ENCODE measurements at regions of chr11 and their contacts with region 1.

Region 1: DNA sequence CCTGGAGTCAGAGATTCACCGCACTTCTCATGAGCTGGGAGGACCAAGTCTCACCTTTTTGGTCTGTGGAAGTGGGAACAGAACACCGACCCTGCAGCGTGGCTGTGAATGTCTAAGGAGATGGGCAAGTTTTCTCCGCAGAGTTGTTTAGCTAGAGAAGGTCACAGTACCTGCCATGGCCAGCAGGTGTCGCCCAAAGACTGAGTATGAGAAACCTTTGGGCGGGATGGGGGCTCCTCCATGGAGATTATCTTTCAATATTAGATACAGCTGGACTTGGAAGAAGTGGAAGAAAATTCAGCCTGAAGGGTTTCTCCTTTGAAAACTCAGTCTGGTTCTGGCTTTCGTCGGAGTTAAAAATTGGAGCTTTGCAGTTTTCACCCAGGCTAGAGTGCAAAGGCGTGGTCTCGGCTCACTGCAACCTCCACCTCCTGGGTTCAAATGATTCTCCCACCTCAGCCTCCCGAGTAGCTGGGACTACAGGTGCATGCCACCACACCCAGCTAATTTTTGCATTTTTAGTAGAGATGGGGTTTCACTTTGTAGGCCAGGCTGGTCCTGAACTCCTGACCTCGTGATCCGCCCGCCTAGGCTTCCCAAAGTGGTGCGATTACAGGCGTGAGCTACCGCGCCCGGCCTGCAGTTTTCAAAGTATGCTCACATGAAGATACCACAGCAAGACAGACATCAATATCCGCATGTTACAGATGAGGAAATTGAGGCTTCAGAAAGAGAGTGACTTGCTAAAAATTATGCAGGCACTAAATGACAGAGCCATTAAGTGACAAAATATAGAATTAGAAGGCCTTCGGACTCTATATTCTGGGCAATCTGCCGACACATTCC is 10.7 kb upstream of the DSCAML1 start:
- DNase-seq: peak; percentile 80 to 82
- ATAC-seq: peak in 6 of 8 donors; percentile 38 to 75 (median 53)
- H3K4me3 ChIP-seq: no peak overlapping the region
- H3K27ac ChIP-seq: no peak overlapping the region
- H3K4me1 ChIP-seq: peaks cover 0 to 23% (median 8%) of the 10 kb centered on the region in 9 donors
- H3K27me3 ChIP-seq: peaks cover 0 to 3% (median 0%) of the 10 kb centered on the region in 7 donors
- CTCF ChIP-seq: peak; percentile 72 to 95 (median 92)

Region 2: DNA sequence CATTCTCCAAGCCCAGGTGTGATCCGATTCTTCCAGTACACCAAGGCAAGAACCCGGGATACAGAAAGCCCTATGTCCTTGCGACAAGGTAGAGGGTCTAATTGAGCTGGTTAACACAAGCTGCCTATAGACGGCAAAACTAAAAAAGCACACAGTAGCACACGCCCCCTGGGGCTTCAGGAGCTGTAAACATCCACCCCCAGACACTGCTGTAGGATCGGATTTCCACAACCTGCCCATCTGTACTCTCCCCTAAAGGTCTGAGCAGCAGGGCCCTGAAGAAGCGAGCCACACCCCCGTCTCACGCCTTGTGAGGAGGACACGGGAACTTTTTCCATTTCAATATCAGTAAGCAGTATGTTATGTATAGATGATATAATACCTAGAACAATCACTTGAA is 1659.6 kb before region 1 on chr11:
- intact Hi-C with region 1: no loop called
- DNase-seq: no peak
- ATAC-seq: no peak
- H3K4me3 ChIP-seq: no peak overlapping the region
- H3K27ac ChIP-seq: no peak overlapping the region
- H3K4me1 ChIP-seq: peaks cover 0 to 6% (median 0%) of the 10 kb centered on the region in 9 donors
- H3K27me3 ChIP-seq: peaks cover 0 to 12% (median 8%) of the 10 kb centered on the region in 7 donors
- CTCF ChIP-seq: no peak

Region 3: DNA sequence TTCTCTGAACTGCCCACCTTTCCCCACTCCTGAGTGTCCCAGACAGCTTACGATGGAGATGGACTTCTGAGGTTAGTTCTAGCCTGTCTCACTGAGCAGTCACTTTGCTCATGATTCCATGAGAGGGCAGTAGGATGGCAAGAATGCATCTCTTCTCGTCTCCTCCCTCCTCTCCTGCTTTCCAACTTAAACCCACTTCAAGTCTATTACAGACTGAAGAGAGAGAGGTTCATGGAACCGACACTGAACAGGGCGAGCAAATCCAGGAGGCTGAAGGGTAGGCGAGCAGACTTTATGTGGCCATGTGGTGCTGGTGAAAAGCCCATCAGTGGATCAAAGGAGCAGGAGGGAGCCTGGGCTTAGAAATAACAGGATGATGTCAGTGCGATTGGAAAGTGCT is 441.5 kb before region 1 on chr11:
- intact Hi-C with region 1: no loop called
- DNase-seq: no peak
- ATAC-seq: no peak
- H3K4me3 ChIP-seq: no peak overlapping the region
- H3K27ac ChIP-seq: no peak overlapping the region
- H3K4me1 ChIP-seq: no peaks in the 10 kb centered on the region
- H3K27me3 ChIP-seq: no peaks in the 10 kb centered on the region
- CTCF ChIP-seq: no peak

Region 4: DNA sequence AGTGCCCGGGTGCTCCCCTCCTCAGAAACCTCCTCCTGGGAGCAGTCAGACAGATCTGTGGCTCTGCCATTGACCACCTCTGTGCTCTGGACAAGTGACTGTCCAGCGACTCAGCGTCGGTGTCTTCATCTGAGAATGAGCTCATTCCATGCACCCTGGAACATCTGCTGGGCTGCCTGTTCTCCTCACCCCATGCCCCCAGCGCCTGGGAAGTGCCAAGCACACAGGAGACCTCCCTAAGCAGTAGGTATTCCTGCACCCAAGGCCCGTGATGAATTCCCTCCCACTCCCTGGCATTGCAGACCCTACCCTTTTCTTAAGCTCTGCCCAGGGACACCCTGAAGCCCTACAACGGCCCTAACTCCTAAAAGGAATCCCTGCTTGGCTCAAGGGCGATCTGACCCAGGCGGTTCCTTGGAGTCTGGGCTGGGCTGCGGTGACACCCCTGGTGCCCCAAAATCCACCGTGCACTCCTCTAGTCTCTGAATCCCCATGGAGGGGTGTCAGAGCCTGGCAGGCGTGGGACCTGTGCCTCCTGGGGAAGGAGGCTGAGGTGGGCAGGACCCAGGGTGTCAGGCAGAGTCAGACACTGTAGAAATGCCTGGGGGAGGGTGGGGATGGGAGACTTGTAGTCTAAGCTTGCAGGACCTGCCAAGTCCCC is 388.1 kb before region 1 on chr11:
- intact Hi-C with region 1: loop called in 1 of 10 experiments (anchors 5 kb)
- DNase-seq: no peak
- ATAC-seq: no peak
- H3K4me3 ChIP-seq: no peak overlapping the region
- H3K27ac ChIP-seq: no peak overlapping the region
- H3K4me1 ChIP-seq: no peaks in the 10 kb centered on the region
- H3K27me3 ChIP-seq: peaks cover 0 to 9% (median 0%) of the 10 kb centered on the region in 7 donors
- CTCF ChIP-seq: no peak

Region 5: DNA sequence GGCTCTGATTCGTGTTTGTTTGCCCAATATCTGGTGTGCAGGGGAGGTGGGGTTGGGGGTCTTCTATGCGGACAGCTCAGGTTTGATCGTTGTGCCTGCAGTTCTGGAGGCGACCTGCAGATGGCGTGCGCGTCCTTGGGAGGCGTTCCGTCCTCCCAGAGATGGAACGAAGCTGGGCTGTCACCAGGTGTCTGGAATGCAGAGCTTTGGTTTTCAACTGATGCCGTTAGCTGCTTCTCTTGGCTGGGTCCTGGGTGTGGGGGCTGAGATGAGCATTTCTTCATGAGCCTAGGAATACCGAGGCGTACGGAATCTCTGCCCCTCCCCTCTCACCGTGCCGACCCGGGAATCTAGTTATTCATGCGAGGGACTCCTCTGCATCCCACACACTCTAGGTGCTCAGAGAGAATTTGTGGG is 381.4 kb before region 1 on chr11:
- intact Hi-C with region 1: loop called in 4 of 10 experiments (anchors 2 to 5 kb)
- DNase-seq: peak; percentile 51 to 76
- ATAC-seq: peak; percentile 27 to 74 (median 68)
- H3K4me3 ChIP-seq: no peak overlapping the region
- H3K27ac ChIP-seq: no peak overlapping the region
- H3K4me1 ChIP-seq: peaks cover 0 to 7% (median 0%) of the 10 kb centered on the region in 9 donors
- H3K27me3 ChIP-seq: peaks cover 0 to 4% (median 0%) of the 10 kb centered on the region in 7 donors
- CTCF ChIP-seq: peak; percentile 82 to 97 (median 95)

Region 6: GRCh38 chr11:117443266-117444195 is 364.2 kb before region 1 on chr11:
- intact Hi-C with region 1: loop called in 8 of 10 experiments (anchors 1 to 5 kb)
- DNase-seq: peak; percentile 41 to 63
- ATAC-seq: peak; percentile 80 to 91 (median 88)
- H3K4me3 ChIP-seq: peak overlapping the region in 2 of 10 donors; percentile 14 to 17
- H3K27ac ChIP-seq: no peak overlapping the region
- H3K4me1 ChIP-seq: peaks cover 0 to 11% (median 0%) of the 10 kb centered on the region in 9 donors
- H3K27me3 ChIP-seq: peaks cover 0 to 20% (median 10%) of the 10 kb centered on the region in 7 donors
- CTCF ChIP-seq: peak in 7 of 9 donors; percentile 60 to 73 (median 68)

Region 7: GRCh38 chr11:117704395-117705100 is 103.2 kb before region 1 on chr11:
- intact Hi-C with region 1: no loop called
- DNase-seq: no peak
- ATAC-seq: peak in 6 of 8 donors; percentile 25 to 88 (median 68)
- H3K4me3 ChIP-seq: no peak overlapping the region
- H3K27ac ChIP-seq: no peak overlapping the region
- H3K4me1 ChIP-seq: peaks cover 0 to 14% (median 0%) of the 10 kb centered on the region in 9 donors
- H3K27me3 ChIP-seq: no peaks in the 10 kb centered on the region
- CTCF ChIP-seq: no peak

Region 8: GRCh38 chr11:117959438-117960149 is 151.9 kb after region 1 on chr11:
- intact Hi-C with region 1: no loop called
- DNase-seq: no peak
- ATAC-seq: peak in 3 of 8 donors; percentile 29 to 35 (median 34)
- H3K4me3 ChIP-seq: no peak overlapping the region
- H3K27ac ChIP-seq: peak overlapping the region in 2 of 10 donors; percentile 22 to 80
- H3K4me1 ChIP-seq: peaks cover 0 to 16% (median 0%) of the 10 kb centered on the region in 9 donors
- H3K27me3 ChIP-seq: peaks cover 0 to 4% (median 0%) of the 10 kb centered on the region in 7 donors
- CTCF ChIP-seq: no peak

Region 9: GRCh38 chr11:118058311-118059245 is 250.9 kb after region 1 on chr11:
- intact Hi-C with region 1: loop called in 6 of 10 experiments (anchors 1 to 5 kb)
- DNase-seq: no peak
- ATAC-seq: no peak
- H3K4me3 ChIP-seq: no peak overlapping the region
- H3K27ac ChIP-seq: no peak overlapping the region
- H3K4me1 ChIP-seq: peaks cover 0 to 20% (median 2%) of the 10 kb centered on the region in 9 donors
- H3K27me3 ChIP-seq: no peaks in the 10 kb centered on the region
- CTCF ChIP-seq: no peak